CD4-positive, alpha-beta T cell (primary cell): ENCODE measurements at regions of chr3 and their contacts with region 1.

Region 1: GRCh38 chr3:120369000-120369399 is 19.8 kb upstream of the LRRC58 start:
- DNase-seq: no peak
- ATAC-seq: no peak
- H3K4me3 ChIP-seq: no peak overlapping the region
- H3K4me3 Mint-ChIP-seq: no peak overlapping the region
- H3K27ac ChIP-seq: no peak overlapping the region
- H3K27ac Mint-ChIP-seq: no peak overlapping the region
- H3K4me1 ChIP-seq: no peaks in the 10 kb centered on the region
- H3K4me1 Mint-ChIP-seq: no peaks in the 10 kb centered on the region
- H3K27me3 ChIP-seq: no peaks in the 10 kb centered on the region
- H3K27me3 Mint-ChIP-seq: peaks cover 19% of the 10 kb centered on the region
- CTCF ChIP-seq: no peak

Region 2: DNA sequence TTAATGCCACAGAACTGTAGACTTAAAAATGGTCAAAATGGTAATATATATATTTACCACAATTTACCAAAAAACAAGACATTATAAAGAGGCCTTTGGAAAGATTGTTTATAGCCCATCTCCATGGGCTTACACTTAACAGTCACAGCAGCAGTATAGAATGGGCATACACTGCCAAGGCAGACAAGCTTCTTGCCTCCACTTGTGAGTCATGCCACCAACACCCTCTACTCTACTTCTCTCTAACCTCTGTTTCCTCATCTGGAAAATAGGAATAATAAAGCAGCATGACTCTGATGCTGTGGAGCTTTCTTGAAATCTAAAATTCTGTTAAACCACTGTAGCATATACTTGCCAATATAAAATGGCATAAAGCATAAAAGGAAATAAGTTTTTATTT is 69.6 kb before region 1 on chr3:
- CTCF ChIA-PET with region 1: no interaction called
- POLR2A ChIA-PET with region 1: no interaction called
- intact Hi-C with region 1: loop called in 1 of 2 experiments (anchors 5 kb)
- DNase-seq: no peak
- ATAC-seq: no peak
- H3K4me3 ChIP-seq: no peak overlapping the region
- H3K4me3 Mint-ChIP-seq: no peak overlapping the region
- H3K27ac ChIP-seq: no peak overlapping the region
- H3K27ac Mint-ChIP-seq: no peak overlapping the region
- H3K4me1 ChIP-seq: no peaks in the 10 kb centered on the region
- H3K4me1 Mint-ChIP-seq: no peaks in the 10 kb centered on the region
- H3K27me3 ChIP-seq: no peaks in the 10 kb centered on the region
- H3K27me3 Mint-ChIP-seq: peaks cover 10% of the 10 kb centered on the region
- CTCF ChIP-seq: no peak